ENCODE measurements at regions of chr19 and their contacts with region 1.

Region 1: DNA sequence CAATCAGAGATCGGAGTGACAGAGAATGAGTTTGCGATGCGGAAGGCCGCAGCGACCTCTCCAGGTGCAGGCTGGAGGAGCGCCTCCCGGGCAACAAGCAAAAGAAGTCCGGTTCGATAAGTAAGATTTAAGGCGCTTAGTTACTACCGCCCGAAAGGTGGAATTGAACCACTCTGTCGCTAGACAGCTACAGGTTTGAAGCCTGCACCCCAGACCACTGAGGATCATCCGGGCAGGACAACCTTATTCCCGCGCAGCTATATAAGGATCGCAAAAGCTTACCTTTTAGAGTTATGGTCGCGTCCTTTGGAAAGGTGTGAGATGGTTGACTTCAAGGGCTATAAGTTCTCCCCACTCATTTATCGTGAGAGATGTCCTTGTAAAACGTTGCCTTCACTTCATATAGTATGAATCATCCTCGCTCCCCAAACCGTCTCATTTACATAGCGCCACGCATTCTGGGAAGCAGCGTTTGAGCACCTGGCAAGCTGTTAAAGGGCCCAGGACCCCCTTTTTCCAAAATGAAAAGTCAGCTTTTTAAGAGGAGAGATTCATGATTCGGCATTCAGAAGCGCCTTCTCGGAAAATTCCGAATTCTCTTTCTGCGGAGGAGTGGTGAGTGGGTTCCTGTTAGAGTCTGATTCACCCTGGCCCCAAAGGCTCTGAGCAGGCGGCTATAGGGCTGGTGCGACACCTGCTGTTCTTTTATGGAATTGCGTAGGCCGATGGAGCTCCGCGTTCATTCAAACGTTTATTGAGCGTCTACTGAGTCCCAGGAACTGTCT is 10.8 kb downstream of the FOSB start:
- DNase-seq: peak; percentile 96
- H3K4me3 ChIP-seq: peak overlapping the region; percentile 71
- H3K27ac ChIP-seq: peak overlapping the region; percentile 83
- H3K4me1 ChIP-seq: peaks cover 29% of the 10 kb centered on the region
- CTCF ChIP-seq: peak; percentile 97

Region 2: DNA sequence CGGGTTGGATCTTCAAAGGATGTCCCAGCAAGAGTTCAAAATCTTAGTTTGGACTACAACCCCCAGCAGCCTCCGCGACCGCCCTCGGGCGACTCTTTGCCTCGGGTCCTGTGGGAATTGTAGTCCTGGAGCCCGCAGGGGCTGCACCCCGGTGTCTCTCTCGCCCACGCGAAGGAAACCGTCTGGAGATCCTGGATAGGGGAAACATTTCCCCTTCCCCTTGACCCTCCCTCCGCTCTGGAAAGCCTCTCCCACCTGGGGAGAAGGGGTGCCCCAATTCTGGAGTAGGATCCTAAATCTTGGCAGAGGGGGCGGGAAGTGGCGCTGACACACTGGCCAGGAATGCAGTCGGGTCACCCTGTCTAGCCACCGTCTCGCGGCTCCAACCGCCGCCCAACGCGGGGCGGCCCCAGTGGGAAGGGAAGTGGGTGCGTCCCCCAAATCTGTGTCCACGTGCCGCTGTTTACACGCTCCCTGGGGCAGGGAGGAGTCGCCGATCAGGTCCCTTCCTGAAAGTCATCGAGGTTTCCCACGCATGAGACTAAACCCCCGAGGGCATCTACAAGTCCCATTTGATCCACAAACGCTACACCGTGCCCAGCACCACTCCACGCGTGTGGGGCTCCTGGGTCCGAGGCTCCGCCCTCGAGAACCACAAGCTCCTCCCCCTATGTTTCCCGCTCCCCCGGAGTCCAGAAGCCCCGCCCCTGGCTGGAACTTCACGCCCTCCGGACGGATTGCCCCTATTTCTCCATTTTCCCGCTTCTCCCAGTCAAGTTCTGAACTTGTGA is 73.0 kb before region 1 on chr19:
- CTCF ChIA-PET with region 1: no interaction called
- POLR2A ChIA-PET with region 1: no interaction called
- intact Hi-C with region 1: loop called (anchors 1 kb)
- DNase-seq: peak; percentile 94
- H3K4me3 ChIP-seq: peak overlapping the region; percentile 89
- H3K27ac ChIP-seq: peak overlapping the region; percentile 69
- H3K4me1 ChIP-seq: peaks cover 38% of the 10 kb centered on the region
- CTCF ChIP-seq: no peak

Region 3: GRCh38 chr19:45423589-45424190 is 55.0 kb before region 1 on chr19 and contains the start of gene ERCC1:
- CTCF ChIA-PET with region 1: interaction called, 4 read pairs
- POLR2A ChIA-PET with region 1: no interaction called
- intact Hi-C with region 1: loop called (anchors 1 kb)
- DNase-seq: peak; percentile 96
- H3K4me3 ChIP-seq: peak within 1 kb of the TSS; percentile 82
- H3K27ac ChIP-seq: peak within 1 kb of the TSS; percentile 79
- H3K4me1 ChIP-seq: peaks cover 74% of the 10 kb centered on the region
- CTCF ChIP-seq: no peak
- total RNA-seq, gene ERCC1: 125 and 126 TPM in 2 replicates

Region 4: DNA sequence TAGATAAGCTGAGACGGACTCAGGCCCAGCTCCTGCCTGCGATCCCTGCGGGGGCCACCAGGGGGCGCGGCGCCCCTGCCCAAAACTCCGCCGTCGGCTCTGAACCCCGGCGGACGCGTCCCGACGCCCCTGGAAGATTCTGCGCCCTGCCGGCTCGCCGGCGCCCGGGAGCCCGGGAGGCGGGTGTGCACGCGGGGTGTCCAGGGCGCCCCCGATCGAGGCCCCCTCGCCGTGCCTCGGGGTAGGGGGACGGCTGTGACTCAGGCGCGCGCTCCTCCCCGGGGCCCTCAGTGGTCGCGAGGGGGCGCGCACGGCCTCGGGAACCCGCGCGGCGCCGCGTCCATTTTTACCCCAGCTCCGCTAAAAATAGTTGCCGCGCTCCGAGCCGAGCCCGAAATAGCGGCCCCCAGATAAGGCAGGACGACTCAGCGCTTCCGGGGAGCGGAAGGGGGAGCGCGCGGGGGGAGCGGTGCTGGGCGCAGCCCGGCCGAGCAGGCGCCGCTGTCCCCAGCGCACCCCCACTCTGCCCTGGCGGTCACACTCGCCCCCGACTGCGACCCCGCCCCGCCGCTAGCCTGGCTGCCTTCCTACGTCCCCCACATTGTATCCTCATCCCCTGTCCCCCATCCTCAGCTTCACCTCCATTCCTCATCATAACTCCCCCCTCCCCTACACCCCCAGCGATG is 38.9 kb before region 1 on chr19:
- CTCF ChIA-PET with region 1: interaction called, 6 read pairs
- POLR2A ChIA-PET with region 1: interaction called, 6 read pairs
- intact Hi-C with region 1: loop called (anchors 1 kb)
- DNase-seq: peak; percentile 89
- H3K4me3 ChIP-seq: peak overlapping the region; percentile 69
- H3K27ac ChIP-seq: peak overlapping the region; percentile 58
- H3K4me1 ChIP-seq: peaks cover 37% of the 10 kb centered on the region
- CTCF ChIP-seq: peak; percentile 99

Region 5: GRCh38 chr19:45451131-45451849 is 27.4 kb before region 1 on chr19:
- CTCF ChIA-PET with region 1: interaction called, 3 read pairs
- POLR2A ChIA-PET with region 1: interaction called, 6 read pairs
- intact Hi-C with region 1: loop called (anchors 1 kb)
- DNase-seq: peak; percentile 72
- H3K4me3 ChIP-seq: peak overlapping the region; percentile 80
- H3K27ac ChIP-seq: peak overlapping the region; percentile 73
- H3K4me1 ChIP-seq: peaks cover 69% of the 10 kb centered on the region
- CTCF ChIP-seq: no peak

Region 6: DNA sequence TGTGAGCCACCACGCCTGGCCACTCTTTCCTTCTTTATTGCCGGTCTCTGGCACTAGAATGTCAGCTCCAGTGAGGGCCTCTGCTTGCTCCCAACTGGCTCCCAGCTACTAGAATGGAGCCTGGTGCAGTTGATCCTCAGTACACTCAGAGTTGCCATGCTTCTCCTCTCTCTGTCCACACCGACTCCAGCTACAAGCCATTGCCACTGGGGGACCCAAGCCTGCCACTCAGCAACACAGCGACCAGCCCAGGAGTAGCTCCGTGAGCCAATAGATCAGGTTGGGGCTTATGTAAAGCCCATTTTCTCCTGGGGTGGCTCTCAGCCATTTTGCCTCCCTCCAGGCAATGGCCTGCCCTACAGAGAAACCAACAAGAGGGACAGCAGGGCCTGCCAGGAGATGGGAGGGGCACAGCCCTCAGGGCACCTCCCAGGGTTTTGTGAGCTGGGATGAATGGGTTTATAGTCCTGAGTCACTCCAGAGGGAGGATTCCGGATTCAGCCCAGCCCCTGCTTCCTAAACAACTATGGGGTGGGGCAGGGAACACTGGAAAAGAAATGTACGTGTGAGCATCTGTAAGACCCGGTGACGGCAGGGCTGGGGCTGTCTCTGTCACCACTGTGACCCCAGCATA is 69.4 kb after region 1 on chr19:
- CTCF ChIA-PET with region 1: no interaction called
- POLR2A ChIA-PET with region 1: no interaction called
- intact Hi-C with region 1: no loop called
- DNase-seq: no peak
- H3K4me3 ChIP-seq: no peak overlapping the region
- H3K27ac ChIP-seq: peak overlapping the region; percentile 16
- H3K4me1 ChIP-seq: peaks cover 35% of the 10 kb centered on the region
- CTCF ChIP-seq: no peak

Measured in OCI-LY7 (cell line).